ENCODE measurements at regions of chr19 and their contacts with region 1.

Region 1: GRCh38 chr19:51660975-51661600 is 14.5 kb upstream of the SIGLEC14 start:
- DNase-seq: peak; percentile 86
- ATAC-seq: peak; percentile 74
- H3K4me3 Mint-ChIP-seq: no peak overlapping the region
- H3K27ac Mint-ChIP-seq: no peak overlapping the region
- H3K4me1 Mint-ChIP-seq: peaks cover 5% of the 10 kb centered on the region
- H3K27me3 Mint-ChIP-seq: peaks cover 32% of the 10 kb centered on the region
- CTCF ChIP-seq: peak; percentile 73

Region 2: GRCh38 chr19:51467864-51468544 is 193.1 kb before region 1 on chr19:
- CTCF ChIA-PET with region 1: interaction called, 82 read pairs
- POLR2A ChIA-PET with region 1: no interaction called
- intact Hi-C with region 1: no loop called
- DNase-seq: no peak
- ATAC-seq: no peak
- H3K4me3 Mint-ChIP-seq: no peak overlapping the region
- H3K27ac Mint-ChIP-seq: no peak overlapping the region
- H3K4me1 Mint-ChIP-seq: peaks cover 35% of the 10 kb centered on the region
- H3K27me3 Mint-ChIP-seq: peaks cover 42% of the 10 kb centered on the region
- CTCF ChIP-seq: no peak

Region 3: GRCh38 chr19:51607920-51608562 is 53.0 kb before region 1 on chr19:
- CTCF ChIA-PET with region 1: interaction called, 14 read pairs
- POLR2A ChIA-PET with region 1: no interaction called
- intact Hi-C with region 1: no loop called
- DNase-seq: peak; percentile 82
- ATAC-seq: no peak
- H3K4me3 Mint-ChIP-seq: no peak overlapping the region
- H3K27ac Mint-ChIP-seq: no peak overlapping the region
- H3K4me1 Mint-ChIP-seq: peaks cover 15% of the 10 kb centered on the region
- H3K27me3 Mint-ChIP-seq: peaks cover 21% of the 10 kb centered on the region
- CTCF ChIP-seq: peak; percentile 51

Region 4: DNA sequence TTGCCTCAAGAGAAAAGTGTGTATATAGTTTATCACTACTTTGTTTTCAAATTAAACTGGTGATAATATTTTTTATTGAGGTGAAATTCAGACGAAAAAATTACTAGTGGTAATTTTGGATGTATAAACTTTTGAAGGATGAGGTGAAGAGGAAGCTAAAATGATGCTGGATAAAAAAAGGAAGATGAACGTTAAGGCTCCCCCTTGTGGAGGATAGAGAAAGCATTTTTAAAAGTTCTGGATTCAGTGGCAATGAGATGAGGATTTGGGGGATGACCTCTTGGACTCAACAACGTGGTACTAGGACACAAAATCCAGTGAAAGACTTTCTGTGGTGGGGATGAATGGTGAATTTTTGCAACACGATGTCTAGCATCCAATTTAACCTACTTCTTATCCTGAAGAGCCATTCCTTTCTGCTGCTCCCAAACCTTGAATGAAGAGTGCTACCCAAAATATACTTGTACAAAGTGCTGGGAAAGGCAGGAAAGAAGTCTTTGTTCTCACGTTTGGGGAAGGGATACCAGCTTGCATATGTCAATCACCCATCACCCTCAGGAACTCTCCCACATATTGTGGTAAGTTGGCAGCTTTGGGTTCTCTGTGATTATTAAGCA is 23.6 kb before region 1 on chr19:
- CTCF ChIA-PET with region 1: interaction called, 12 read pairs
- POLR2A ChIA-PET with region 1: interaction called, 3 read pairs
- intact Hi-C with region 1: no loop called
- DNase-seq: no peak
- ATAC-seq: no peak
- H3K4me3 Mint-ChIP-seq: no peak overlapping the region
- H3K27ac Mint-ChIP-seq: no peak overlapping the region
- H3K4me1 Mint-ChIP-seq: no peaks in the 10 kb centered on the region
- H3K27me3 Mint-ChIP-seq: peaks cover 26% of the 10 kb centered on the region
- CTCF ChIP-seq: peak; percentile 65

Region 5: DNA sequence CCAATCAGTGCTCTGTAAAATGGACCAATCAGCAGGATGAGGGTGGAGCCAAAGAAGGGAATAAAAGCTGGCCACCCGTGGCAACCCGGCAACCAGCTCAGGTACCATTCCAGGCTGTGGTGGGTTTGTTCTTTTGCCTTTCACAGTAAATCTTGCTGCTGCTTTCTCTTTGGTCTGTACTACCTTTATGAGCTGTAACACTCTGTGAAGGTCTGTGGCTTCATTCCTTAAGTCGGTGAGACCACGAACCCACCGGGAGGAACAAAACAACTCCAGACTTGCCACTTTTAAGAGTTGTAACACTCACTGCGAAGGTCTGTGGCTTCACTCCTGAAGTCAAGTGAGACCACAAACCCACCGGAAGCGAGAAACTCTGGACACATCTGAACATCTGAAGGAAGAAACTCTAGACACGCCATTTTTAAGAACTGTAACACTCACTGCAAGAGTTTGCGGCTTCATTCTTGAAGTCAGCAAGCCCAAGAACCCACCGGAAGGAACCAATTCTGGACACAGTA is 15.5 kb after region 1 on chr19:
- CTCF ChIA-PET with region 1: interaction called, 20 read pairs
- POLR2A ChIA-PET with region 1: no interaction called
- intact Hi-C with region 1: no loop called
- DNase-seq: peak; percentile 87
- ATAC-seq: peak; percentile 86
- H3K4me3 Mint-ChIP-seq: peak overlapping the region; percentile 31
- H3K27ac Mint-ChIP-seq: peak overlapping the region; percentile 72
- H3K4me1 Mint-ChIP-seq: peaks cover 15% of the 10 kb centered on the region
- H3K27me3 Mint-ChIP-seq: peaks cover 5% of the 10 kb centered on the region
- CTCF ChIP-seq: no peak

Measured in activated CD8-positive, alpha-beta T cell treated with anti-CD3 and anti-CD28 coated beads for 36 hours (primary cell).